Ovary (tissue), 10 donors: ENCODE measurements at regions of chr6 and their contacts with region 1.

Region 1: GRCh38 chr6:158220786-158221442 is 52.8 kb downstream of the GTF2H5 start:
- DNase-seq: peak; percentile 69 to 87 (median 80)
- H3K4me3 ChIP-seq: no peak overlapping the region
- H3K27ac ChIP-seq: no peak overlapping the region
- H3K4me1 ChIP-seq: no peaks in the 10 kb centered on the region
- H3K27me3 ChIP-seq: no peaks in the 10 kb centered on the region
- CTCF ChIP-seq: peak; percentile 77 to 89 (median 81)
- EP300 ChIP-seq: no peak
- POLR2A ChIP-seq: no peak

Region 2: DNA sequence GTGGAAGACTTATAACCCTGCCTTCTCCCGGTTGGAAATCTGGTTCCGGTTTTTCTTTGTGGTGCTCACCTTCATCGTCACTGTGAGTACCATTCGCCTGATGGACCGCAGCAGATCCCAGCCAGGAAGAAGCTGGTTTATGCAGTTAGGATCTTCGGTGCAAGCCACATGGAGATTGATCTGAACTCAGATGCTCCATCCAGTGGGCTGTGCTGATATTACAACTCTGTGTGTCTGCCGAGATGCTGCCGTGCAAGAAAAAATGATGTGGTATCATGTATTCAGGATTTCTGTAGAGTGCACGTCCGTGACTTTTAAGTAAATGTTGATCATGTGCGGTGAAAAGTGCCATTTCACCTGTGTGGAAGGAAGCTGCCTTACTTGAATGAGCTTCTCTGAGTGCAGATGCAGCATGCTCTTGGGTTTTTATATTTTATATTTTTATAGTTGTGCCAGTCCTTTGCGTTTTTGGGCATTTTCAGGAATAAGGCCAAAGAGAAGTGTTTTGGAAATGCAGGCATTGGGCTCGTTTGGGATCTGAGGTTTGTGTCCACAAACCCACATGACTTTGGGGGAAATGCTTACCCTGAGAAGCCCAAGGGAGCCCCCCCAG is 384.5 kb after region 1 on chr6:
- intact Hi-C with region 1: loop called (anchors 5 to 10 kb)
- DNase-seq: peak in 4 of 5 donors; percentile 50 to 72 (median 64)
- H3K4me3 ChIP-seq: no peak overlapping the region
- H3K27ac ChIP-seq: no peak overlapping the region
- H3K4me1 ChIP-seq: peaks cover 2% of the 10 kb centered on the region
- H3K27me3 ChIP-seq: no peaks in the 10 kb centered on the region
- CTCF ChIP-seq: peak; percentile 61 to 67 (median 65)
- EP300 ChIP-seq: no peak
- POLR2A ChIP-seq: no peak

Region 3: GRCh38 chr6:158686791-158687381 is 466.0 kb after region 1 on chr6:
- intact Hi-C with region 1: loop called in 3 of 4 experiments (anchors 2 to 5 kb)
- DNase-seq: no peak
- H3K4me3 ChIP-seq: no peak overlapping the region
- H3K27ac ChIP-seq: no peak overlapping the region
- H3K4me1 ChIP-seq: peaks cover 4% of the 10 kb centered on the region
- H3K27me3 ChIP-seq: no peaks in the 10 kb centered on the region
- CTCF ChIP-seq: no peak
- EP300 ChIP-seq: no peak
- POLR2A ChIP-seq: no peak

Region 4: GRCh38 chr6:158697811-158698210 is 476.9 kb after region 1 on chr6:
- intact Hi-C with region 1: loop called in 3 of 4 experiments (anchors 5 kb)
- DNase-seq: no peak
- H3K4me3 ChIP-seq: no peak overlapping the region
- H3K27ac ChIP-seq: no peak overlapping the region
- H3K4me1 ChIP-seq: no peaks in the 10 kb centered on the region
- H3K27me3 ChIP-seq: no peaks in the 10 kb centered on the region
- CTCF ChIP-seq: no peak
- EP300 ChIP-seq: no peak
- POLR2A ChIP-seq: no peak